K562 (cell line): ENCODE measurements at regions of chr9 and their contacts with region 1.

Region 1: GRCh38 chr9:120750421-120750820 is 36.2 kb upstream of the MEGF9 start:
- DNase-seq: no peak
- ATAC-seq: no peak
- H3K4me3 ChIP-seq: no peak overlapping the region
- H3K27ac ChIP-seq: no peak overlapping the region
- H3K4me1 ChIP-seq: no peaks in the 10 kb centered on the region
- H3K27me3 ChIP-seq: no peaks in the 10 kb centered on the region
- CTCF ChIP-seq: no peak
- EP300 ChIP-seq: no peak
- POLR2A ChIP-seq: no peak
- RAD21 ChIP-seq: no peak

Region 2: DNA sequence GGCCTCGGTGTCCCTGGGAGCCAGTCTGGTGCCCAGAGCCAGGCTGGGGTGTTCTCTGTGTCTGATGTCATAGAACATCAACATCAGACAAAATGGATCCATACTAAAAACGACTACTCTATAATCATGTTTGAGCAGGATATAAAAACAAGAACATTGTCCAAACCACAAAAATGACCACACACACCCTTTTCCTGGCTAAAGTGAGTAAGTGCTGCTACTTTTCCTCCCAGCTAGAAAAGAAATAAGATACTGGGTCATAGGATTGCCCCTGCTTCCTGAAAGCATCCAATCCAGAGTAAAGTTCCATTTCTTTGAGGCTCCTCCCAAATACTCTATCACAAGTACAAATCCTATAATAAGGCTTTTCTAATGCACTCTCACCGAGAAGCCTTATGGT is 195.8 kb after region 1 on chr9:
- CTCF ChIA-PET with region 1: no interaction called
- POLR2A ChIA-PET with region 1: no interaction called
- in situ Hi-C with region 1: loop called (anchors 5 kb)
- intact Hi-C with region 1: no loop called
- DNase-seq: no peak
- ATAC-seq: no peak
- H3K4me3 ChIP-seq: no peak overlapping the region
- H3K27ac ChIP-seq: no peak overlapping the region
- H3K4me1 ChIP-seq: no peaks in the 10 kb centered on the region; a peak in 1 of 5 replicates
- H3K27me3 ChIP-seq: peaks cover 0 to 3% of the 10 kb centered on the region in 2 experiments; a peak in 1 of 5 replicates
- CTCF ChIP-seq: no peak
- EP300 ChIP-seq: no peak
- POLR2A ChIP-seq: no peak
- RAD21 ChIP-seq: no peak